T-cell (primary cell): ENCODE measurements at regions of chr19 and their contacts with region 1.

Region 1: DNA sequence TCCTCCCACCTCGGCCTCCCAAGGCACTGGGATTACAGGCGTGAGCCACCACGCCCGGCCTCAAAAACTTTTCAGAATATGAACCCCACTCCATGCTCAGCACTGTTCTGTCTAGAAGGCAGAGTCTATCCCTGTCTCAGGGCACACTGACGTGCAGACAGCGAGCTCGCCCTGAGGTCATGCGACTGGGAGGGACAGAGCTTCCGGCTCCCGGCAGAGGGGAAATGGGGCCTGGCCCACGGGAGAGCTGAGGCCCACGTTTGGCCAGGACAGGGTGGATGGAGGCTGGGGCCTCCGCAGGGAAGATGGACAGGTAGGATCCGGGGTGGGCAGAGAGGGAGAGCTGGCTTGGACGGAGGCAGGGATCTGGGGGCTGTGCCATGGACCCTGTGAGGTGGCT is 2.8 kb upstream of the AZU1 start:
- DNase-seq: no peak
- ATAC-seq: no peak
- H3K4me3 ChIP-seq: no peak overlapping the region
- H3K4me3 Mint-ChIP-seq: no peak overlapping the region
- H3K27ac ChIP-seq: no peak overlapping the region
- H3K27ac Mint-ChIP-seq: peak overlapping the region in 1 of 2 donors; percentile 57
- H3K4me1 ChIP-seq: peaks cover 0 to 2% of the 10 kb centered on the region in 2 experiments
- H3K4me1 Mint-ChIP-seq: peaks cover 0 to 2% (median 0%) of the 10 kb centered on the region in 3 donors
- H3K27me3 ChIP-seq: peaks cover 2 to 65% of the 10 kb centered on the region in 2 experiments
- H3K27me3 Mint-ChIP-seq: peaks cover 13 to 21% of the 10 kb centered on the region in 2 donors

Region 2: GRCh38 chr19:729564-730381 is 95.1 kb before region 1 on chr19:
- CTCF ChIA-PET with region 1: no interaction called
- POLR2A ChIA-PET with region 1: interaction called in 1 of 2 experiments, 20 read pairs
- DNase-seq: no peak
- ATAC-seq: no peak
- H3K4me3 ChIP-seq: no peak overlapping the region
- H3K4me3 Mint-ChIP-seq: no peak overlapping the region
- H3K27ac ChIP-seq: no peak overlapping the region
- H3K27ac Mint-ChIP-seq: no peak overlapping the region
- H3K4me1 ChIP-seq: peaks cover 0 to 14% of the 10 kb centered on the region in 2 experiments
- H3K4me1 Mint-ChIP-seq: peaks cover 6 to 13% (median 7%) of the 10 kb centered on the region in 3 donors
- H3K27me3 ChIP-seq: peaks cover 0 to 19% of the 10 kb centered on the region in 2 experiments
- H3K27me3 Mint-ChIP-seq: peaks cover 4 to 7% of the 10 kb centered on the region in 2 donors

Region 3: GRCh38 chr19:958967-959820 is 134.3 kb after region 1 on chr19:
- CTCF ChIA-PET with region 1: no interaction called
- POLR2A ChIA-PET with region 1: no interaction called
- DNase-seq: no peak
- ATAC-seq: peak in 1 of 4 experiments; percentile 53
- H3K4me3 ChIP-seq: no peak overlapping the region
- H3K4me3 Mint-ChIP-seq: no peak overlapping the region
- H3K27ac ChIP-seq: no peak overlapping the region
- H3K27ac Mint-ChIP-seq: no peak overlapping the region
- H3K4me1 ChIP-seq: peaks cover 0 to 9% of the 10 kb centered on the region in 2 experiments
- H3K4me1 Mint-ChIP-seq: peaks cover 0 to 8% (median 4%) of the 10 kb centered on the region in 3 donors
- H3K27me3 ChIP-seq: no peaks in the 10 kb centered on the region
- H3K27me3 Mint-ChIP-seq: no peaks in the 10 kb centered on the region